ENCODE measurements at regions of chr10 and their contacts with region 1.

Region 1: GRCh38 chr10:75235375-75236177 is at the start of gene COMTD1:
- DNase-seq: peak; percentile 91 to 92
- H3K4me3 ChIP-seq: peak within 1 kb of the TSS; percentile 59 to 60
- H3K27ac ChIP-seq: peak within 1 kb of the TSS; percentile 84 to 88
- H3K4me1 ChIP-seq: no peaks in the 10 kb centered on the region
- H3K27me3 ChIP-seq: no peaks in the 10 kb centered on the region
- CTCF ChIP-seq: peak; percentile 100
- POLR2A ChIP-seq: peak in 1 of 2 donors; percentile 60
- total RNA-seq, gene COMTD1: 3.2 to 59.7 (median 22.9) TPM

Region 2: DNA sequence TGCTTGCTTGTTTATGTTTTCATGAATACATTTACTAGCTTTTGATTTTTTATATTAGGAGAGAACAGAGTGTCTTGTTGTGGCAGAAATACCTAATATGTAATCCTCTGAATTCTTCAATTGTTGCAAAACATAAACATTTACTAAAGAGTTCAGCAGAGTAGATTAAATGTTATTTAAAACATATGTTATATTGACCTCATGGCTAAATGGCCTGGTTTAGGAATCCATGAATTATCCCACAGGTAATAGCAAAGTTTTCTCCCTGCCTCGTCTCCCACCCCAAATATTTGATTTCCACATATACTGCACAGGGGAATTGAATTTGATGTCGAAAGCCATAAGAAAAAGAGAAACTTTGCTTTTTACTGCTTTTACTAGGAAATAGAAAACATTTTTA is 972.7 kb before region 1 on chr10:
- intact Hi-C with region 1: loop called (anchors 10 kb)
- DNase-seq: no peak
- H3K4me3 ChIP-seq: no peak overlapping the region
- H3K27ac ChIP-seq: no peak overlapping the region
- H3K4me1 ChIP-seq: no peaks in the 10 kb centered on the region
- H3K27me3 ChIP-seq: no peaks in the 10 kb centered on the region
- CTCF ChIP-seq: no peak
- POLR2A ChIP-seq: no peak

Region 3: DNA sequence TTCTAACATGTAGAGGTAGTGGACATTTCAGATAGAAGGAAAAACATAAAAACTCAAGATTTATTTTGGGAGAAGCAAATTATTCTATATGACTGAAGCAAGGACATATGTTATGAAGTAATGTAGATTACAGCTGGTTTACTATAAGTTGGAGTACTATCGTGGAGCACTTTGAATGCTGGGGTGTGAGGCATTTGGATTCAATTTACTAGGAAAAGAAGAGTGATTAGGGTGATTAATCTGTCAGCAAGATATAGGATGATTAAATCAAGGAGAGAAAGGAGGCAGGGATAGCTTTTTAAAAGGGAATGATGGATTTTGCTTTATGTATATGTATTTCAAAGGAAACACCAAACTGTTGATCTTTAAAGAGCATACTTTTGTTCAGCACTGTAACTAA is 727.6 kb before region 1 on chr10:
- intact Hi-C with region 1: no loop called
- DNase-seq: no peak
- H3K4me3 ChIP-seq: no peak overlapping the region
- H3K27ac ChIP-seq: no peak overlapping the region
- H3K4me1 ChIP-seq: no peaks in the 10 kb centered on the region
- H3K27me3 ChIP-seq: no peaks in the 10 kb centered on the region
- CTCF ChIP-seq: no peak
- POLR2A ChIP-seq: no peak

Region 4: GRCh38 chr10:75099952-75100763 is 135.4 kb before region 1 on chr10:
- intact Hi-C with region 1: loop called (anchors 10 kb)
- DNase-seq: peak; percentile 78 to 85
- H3K4me3 ChIP-seq: no peak overlapping the region
- H3K27ac ChIP-seq: peak overlapping the region; percentile 66 to 87
- H3K4me1 ChIP-seq: peaks cover 0 to 8% of the 10 kb centered on the region in 2 donors
- H3K27me3 ChIP-seq: no peaks in the 10 kb centered on the region
- CTCF ChIP-seq: peak; percentile 98 to 99 (median 99)
- POLR2A ChIP-seq: peak in 1 of 2 donors; percentile 31

Measured in uterus (tissue), 4 donors.